ENCODE measurements at regions of chr20 and their contacts with region 1.

Region 1: DNA sequence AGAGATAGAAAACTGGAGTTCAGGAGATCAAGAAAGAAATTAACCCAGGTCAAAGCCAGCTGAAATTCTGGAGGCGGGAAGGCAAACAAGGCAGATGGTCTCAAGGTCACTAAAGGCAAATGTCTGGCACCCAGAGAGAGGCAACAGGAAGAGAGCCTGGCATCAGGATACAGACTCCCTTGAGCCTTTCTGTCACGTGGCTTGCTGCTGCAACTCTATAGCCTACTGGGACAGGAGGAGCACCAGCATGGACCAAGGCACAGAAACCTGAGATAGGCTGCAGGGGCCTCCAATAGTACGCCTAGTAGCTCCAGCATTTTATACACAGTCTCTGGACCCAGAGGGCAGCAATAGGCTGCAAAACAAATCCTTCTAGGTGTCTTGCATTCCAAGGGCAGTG is 75.1 kb downstream of the SEL1L2 start:
- DNase-seq: no peak

Region 2: DNA sequence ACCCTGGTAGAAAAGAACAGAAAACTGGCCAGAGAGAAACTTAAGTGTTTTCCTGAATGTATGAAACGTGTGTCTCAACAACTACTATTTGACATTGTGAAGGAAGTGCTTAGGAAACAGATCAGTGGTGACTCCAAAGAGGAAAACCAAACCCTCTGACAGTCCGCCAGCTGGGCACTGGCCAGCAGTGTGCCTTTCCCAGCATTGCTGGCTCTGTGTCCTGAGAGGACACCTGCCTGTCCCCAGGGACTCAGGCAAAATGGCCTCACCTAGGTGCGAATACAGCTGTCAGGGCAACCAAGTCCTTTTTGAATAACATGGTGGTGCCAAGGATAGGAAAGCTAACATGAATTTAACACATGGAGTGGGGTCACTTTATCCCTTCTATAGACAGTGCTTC is 58.0 kb before region 1 on chr20:
- CTCF ChIA-PET with region 1: interaction called, 10 read pairs
- POLR2A ChIA-PET with region 1: no interaction called
- DNase-seq: no peak